ENCODE measurements at regions of chr12 and their contacts with region 1.

Region 1: GRCh38 chr12:54032627-54033100 is at the start of gene HOXC5:
- DNase-seq: peak; percentile 77
- ATAC-seq: peak; percentile 32
- H3K4me3 Mint-ChIP-seq: peak within 1 kb of the TSS; percentile 49
- H3K27ac Mint-ChIP-seq: no peak within 1 kb of the TSS
- H3K4me1 Mint-ChIP-seq: peaks cover 22% of the 10 kb centered on the region
- H3K27me3 Mint-ChIP-seq: peaks cover 90% of the 10 kb centered on the region
- total RNA-seq, gene HOXC5: not detected

Region 2: GRCh38 chr12:53907103-53907502 is 125.6 kb before region 1 on chr12:
- CTCF ChIA-PET with region 1: no interaction called
- DNase-seq: no peak
- ATAC-seq: no peak
- H3K4me3 Mint-ChIP-seq: no peak overlapping the region
- H3K27ac Mint-ChIP-seq: no peak overlapping the region
- H3K4me1 Mint-ChIP-seq: no peaks in the 10 kb centered on the region
- H3K27me3 Mint-ChIP-seq: peaks cover 39% of the 10 kb centered on the region

Region 3: GRCh38 chr12:54005853-54006686 is 26.6 kb before region 1 on chr12:
- CTCF ChIA-PET with region 1: interaction called, 74 read pairs
- DNase-seq: peak; percentile 87
- ATAC-seq: peak; percentile 88
- H3K4me3 Mint-ChIP-seq: peak overlapping the region; percentile 64
- H3K27ac Mint-ChIP-seq: no peak overlapping the region
- H3K4me1 Mint-ChIP-seq: peaks cover 15% of the 10 kb centered on the region
- H3K27me3 Mint-ChIP-seq: peaks cover 95% of the 10 kb centered on the region

Region 4: DNA sequence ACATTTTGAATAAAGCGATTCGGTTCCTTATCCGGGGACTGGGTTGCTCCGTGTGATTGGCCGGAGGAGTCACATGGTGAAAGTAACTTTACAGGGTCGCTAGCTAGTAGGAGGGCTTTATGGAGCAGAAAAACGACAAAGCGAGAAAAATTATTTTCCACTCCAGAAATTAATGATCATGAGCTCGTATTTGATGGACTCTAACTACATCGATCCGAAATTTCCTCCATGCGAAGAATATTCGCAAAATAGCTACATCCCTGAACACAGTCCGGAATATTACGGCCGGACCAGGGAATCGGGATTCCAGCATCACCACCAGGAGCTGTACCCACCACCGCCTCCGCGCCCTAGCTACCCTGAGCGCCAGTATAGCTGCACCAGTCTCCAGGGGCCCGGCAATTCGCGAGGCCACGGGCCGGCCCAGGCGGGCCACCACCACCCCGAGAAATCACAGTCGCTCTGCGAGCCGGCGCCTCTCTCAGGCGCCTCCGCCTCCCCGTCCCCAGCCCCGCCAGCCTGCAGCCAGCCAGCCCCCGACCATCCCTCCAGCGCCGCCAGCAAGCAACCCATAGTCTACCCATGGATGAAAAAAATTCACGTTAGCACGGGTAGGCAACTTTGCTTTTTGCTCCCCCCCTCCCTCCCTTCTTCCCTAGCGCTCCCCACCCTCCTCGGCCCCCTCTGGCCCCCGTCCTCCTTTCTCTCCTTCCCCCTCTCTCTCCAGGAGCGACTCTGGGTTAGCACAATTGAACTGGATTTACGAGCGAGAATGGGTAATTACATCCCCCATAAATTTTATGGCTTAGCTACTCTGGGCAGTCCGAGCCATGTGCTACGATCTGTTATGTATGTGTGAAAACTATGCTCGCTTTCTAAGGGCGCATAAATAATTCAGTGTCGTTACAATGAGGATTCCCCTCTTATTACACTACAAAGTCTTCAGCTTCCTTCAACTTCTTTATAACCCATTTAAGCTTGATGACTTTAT is 21.4 kb after region 1 on chr12 and contains the start of gene HOXC4:
- CTCF ChIA-PET with region 1: interaction called, 25 read pairs
- DNase-seq: peak; percentile 62
- ATAC-seq: peak; percentile 80
- H3K4me3 Mint-ChIP-seq: peak within 1 kb of the TSS; percentile 75
- H3K27ac Mint-ChIP-seq: peak within 1 kb of the TSS; percentile 79
- H3K4me1 Mint-ChIP-seq: peaks cover 30% of the 10 kb centered on the region
- H3K27me3 Mint-ChIP-seq: peaks cover 88% of the 10 kb centered on the region
- total RNA-seq, gene HOXC4: 1.5 to 1.9 TPM

Region 5: DNA sequence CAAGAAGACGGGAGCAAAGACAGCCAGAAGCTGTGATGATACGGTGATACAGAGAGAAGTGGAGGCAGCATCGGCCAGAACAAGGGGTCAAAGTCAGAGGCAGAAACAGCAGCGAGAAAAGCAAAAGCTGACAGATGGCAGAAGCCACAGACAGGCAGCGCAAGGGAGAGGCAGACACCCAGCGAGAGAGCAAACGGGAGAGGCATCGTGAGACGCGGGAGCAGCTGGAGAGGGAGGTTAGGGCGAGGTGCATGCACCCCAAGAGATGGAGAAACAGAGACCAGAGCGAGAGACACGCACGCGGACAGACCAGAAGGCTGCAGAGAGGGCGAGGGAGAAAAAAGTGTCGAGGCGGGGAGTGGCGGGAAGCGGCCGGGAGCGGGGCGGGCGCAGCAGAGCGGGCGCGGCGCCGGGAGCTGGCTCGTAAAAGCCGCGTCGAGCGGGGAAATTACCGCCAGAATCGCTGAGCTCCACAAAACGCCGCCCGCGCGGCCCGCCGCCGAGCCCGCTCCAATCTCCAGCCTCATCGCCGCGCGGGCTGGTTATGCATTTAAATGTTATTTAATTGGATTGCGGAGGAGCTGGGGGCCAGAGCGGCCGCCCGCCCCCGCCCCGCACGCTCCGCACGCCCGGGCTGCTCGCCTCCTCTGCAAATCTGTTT is 140.5 kb after region 1 on chr12:
- CTCF ChIA-PET with region 1: interaction called, 15 read pairs
- DNase-seq: no peak
- ATAC-seq: peak; percentile 76
- H3K4me3 Mint-ChIP-seq: no peak overlapping the region
- H3K27ac Mint-ChIP-seq: no peak overlapping the region
- H3K4me1 Mint-ChIP-seq: no peaks in the 10 kb centered on the region
- H3K27me3 Mint-ChIP-seq: no peaks in the 10 kb centered on the region

Region 6: GRCh38 chr12:54201001-54201794 is 168.5 kb after region 1 on chr12:
- CTCF ChIA-PET with region 1: interaction called, 158 read pairs
- DNase-seq: peak; percentile 69
- ATAC-seq: peak; percentile 89
- H3K4me3 Mint-ChIP-seq: no peak overlapping the region
- H3K27ac Mint-ChIP-seq: no peak overlapping the region
- H3K4me1 Mint-ChIP-seq: no peaks in the 10 kb centered on the region
- H3K27me3 Mint-ChIP-seq: peaks cover 62% of the 10 kb centered on the region

Region 7: GRCh38 chr12:54214553-54215406 is 182.1 kb after region 1 on chr12:
- CTCF ChIA-PET with region 1: interaction called, 158 read pairs
- DNase-seq: peak; percentile 95
- ATAC-seq: peak; percentile 90
- H3K4me3 Mint-ChIP-seq: peak overlapping the region; percentile 61
- H3K27ac Mint-ChIP-seq: peak overlapping the region; percentile 18
- H3K4me1 Mint-ChIP-seq: peaks cover 36% of the 10 kb centered on the region
- H3K27me3 Mint-ChIP-seq: peaks cover 7% of the 10 kb centered on the region

Measured in activated CD8-positive, alpha-beta memory T cell treated with anti-CD3 and anti-CD28 coated beads, Interleukin-2, amount 10 ng/mL, durations not matched to agents 7 days and 5 days (primary cell).